ENCODE measurements at regions of chr1 and their contacts with region 1.

Region 1: GRCh38 chr1:166479052-166479631 is 312.3 kb upstream of the FAM78B start:
- DNase-seq: peak; percentile 71
- H3K4me3 Mint-ChIP-seq: no peak overlapping the region
- H3K27ac Mint-ChIP-seq: no peak overlapping the region
- H3K4me1 Mint-ChIP-seq: no peaks in the 10 kb centered on the region
- H3K27me3 Mint-ChIP-seq: peaks cover 29% of the 10 kb centered on the region
- CTCF ChIP-seq: peak; percentile 89

Region 2: GRCh38 chr1:165717918-165718515 is 761.1 kb before region 1 on chr1:
- CTCF ChIA-PET with region 1: interaction called, 3 read pairs
- POLR2A ChIA-PET with region 1: no interaction called
- intact Hi-C with region 1: loop called (anchors 1 kb)
- DNase-seq: peak; percentile 80
- H3K4me3 Mint-ChIP-seq: no peak overlapping the region
- H3K27ac Mint-ChIP-seq: no peak overlapping the region
- H3K4me1 Mint-ChIP-seq: no peaks in the 10 kb centered on the region
- H3K27me3 Mint-ChIP-seq: no peaks in the 10 kb centered on the region
- CTCF ChIP-seq: peak; percentile 87

Region 3: DNA sequence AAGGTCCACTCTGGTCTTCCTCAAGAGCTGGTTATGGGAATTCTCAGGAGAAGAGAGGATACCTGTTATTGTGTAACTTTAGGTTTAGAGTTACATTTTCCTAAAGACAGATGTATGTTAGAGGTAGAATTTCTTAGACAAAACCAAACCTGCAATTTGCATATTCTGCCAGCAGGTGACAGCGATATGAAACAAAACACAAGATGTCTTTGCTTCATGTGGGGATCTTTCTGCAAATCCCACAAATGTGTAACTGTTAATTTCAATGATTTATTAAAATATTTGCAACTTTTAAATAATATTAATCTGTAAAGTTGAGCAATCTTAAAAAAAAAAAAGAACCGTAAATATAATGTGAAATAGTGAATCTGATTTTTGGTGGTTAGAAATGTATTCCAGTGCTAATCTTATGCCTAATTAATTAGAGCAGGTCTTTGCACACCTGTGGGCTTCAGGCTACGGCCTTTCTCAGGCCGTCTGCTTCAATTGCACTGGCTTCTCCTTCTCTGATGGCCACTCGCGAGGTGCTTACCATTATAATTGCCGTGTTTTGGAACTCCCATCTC is 345.8 kb before region 1 on chr1:
- CTCF ChIA-PET with region 1: interaction called, 20 read pairs
- POLR2A ChIA-PET with region 1: no interaction called
- intact Hi-C with region 1: loop called (anchors 1 kb)
- DNase-seq: peak; percentile 68
- H3K4me3 Mint-ChIP-seq: no peak overlapping the region
- H3K27ac Mint-ChIP-seq: no peak overlapping the region
- H3K4me1 Mint-ChIP-seq: no peaks in the 10 kb centered on the region
- H3K27me3 Mint-ChIP-seq: peaks cover 17% of the 10 kb centered on the region
- CTCF ChIP-seq: peak; percentile 83

Region 4: DNA sequence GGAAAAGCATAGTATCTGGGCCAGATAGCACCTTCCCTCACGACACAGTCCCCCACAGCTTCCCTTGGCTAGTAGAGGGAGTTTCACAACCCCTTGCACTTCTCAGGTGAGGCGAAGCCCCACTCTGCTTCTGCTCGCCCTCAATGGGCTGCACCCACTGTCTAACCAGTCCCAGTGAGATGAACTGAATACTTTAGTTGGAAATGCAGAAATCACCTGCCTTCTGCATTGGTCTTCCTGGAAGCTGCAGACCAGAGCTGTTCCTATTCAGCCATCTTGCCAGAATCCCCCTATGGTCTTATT is 69.1 kb before region 1 on chr1:
- CTCF ChIA-PET with region 1: no interaction called
- POLR2A ChIA-PET with region 1: no interaction called
- intact Hi-C with region 1: no loop called
- DNase-seq: no peak
- H3K4me3 Mint-ChIP-seq: no peak overlapping the region
- H3K27ac Mint-ChIP-seq: no peak overlapping the region
- H3K4me1 Mint-ChIP-seq: no peaks in the 10 kb centered on the region
- H3K27me3 Mint-ChIP-seq: no peaks in the 10 kb centered on the region
- CTCF ChIP-seq: no peak

Region 5: DNA sequence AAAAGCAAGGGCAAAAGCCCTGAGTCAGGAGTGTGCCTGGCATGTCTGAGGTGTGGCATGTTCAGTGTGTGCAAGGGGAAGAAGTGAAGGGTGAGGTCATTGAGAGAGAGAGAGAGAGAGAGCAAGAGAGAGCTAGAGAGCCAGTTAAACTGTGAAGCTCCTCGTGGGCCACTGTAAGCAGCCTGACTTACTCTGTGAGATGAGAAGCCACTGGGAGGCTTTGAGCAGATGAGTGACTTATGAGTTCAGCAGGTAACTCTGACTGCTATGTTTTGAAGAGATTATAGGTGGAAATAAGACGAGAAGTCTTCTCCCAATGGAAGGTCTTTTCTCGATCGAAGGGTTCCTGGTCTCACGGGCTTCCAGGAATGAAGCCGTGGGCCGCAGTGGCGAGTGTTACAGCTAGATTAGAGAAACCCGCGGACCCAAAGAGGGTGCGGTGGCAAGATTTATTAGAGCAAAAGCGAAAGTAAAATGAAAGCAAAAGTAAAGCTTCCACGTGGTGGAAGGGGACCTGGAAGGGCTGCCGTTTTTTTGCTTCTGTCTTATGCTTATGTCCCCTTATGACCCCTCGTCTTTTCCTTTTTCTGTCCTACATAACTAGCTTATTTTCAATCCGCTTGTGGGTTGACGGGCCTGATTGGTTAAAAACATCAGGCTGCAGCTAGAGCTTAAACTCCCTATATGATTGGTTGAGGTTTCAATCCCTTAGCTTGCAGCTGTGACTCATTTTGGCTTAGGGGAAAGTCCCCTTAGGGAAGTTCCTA is 10.7 kb after region 1 on chr1:
- CTCF ChIA-PET with region 1: interaction called, 20 read pairs
- POLR2A ChIA-PET with region 1: no interaction called
- intact Hi-C with region 1: no loop called
- DNase-seq: peak; percentile 45
- H3K4me3 Mint-ChIP-seq: no peak overlapping the region
- H3K27ac Mint-ChIP-seq: no peak overlapping the region
- H3K4me1 Mint-ChIP-seq: no peaks in the 10 kb centered on the region
- H3K27me3 Mint-ChIP-seq: no peaks in the 10 kb centered on the region
- CTCF ChIP-seq: no peak

Region 6: DNA sequence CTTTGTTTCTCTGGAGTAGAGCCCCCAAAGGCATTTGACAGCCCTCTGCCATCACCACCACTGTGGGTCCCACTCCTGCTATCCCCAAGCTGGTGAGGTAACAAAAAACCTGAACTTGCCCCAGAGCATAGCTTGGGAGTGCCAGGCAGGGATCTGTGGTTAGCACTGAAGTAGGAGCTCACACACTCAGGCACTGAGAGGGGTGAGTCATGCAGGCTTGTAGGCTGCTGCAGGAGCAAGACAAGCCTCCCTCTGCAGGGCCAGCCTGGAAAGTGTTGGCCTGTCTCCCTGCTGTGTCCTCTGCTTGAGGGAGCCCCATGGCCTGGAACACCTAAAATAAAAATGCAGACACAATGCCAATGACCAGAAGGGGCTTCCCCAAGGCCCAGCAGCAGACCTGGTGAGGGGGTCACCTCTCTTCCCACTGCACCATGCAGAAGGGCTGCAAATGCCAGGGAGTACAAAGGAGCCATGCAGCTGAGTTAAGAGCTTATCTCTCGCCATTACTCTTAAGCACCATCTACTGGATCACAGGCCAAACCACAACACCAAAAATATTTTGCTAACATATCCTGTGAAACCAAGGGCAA is 251.3 kb after region 1 on chr1:
- CTCF ChIA-PET with region 1: interaction called, 25 read pairs
- POLR2A ChIA-PET with region 1: no interaction called
- intact Hi-C with region 1: loop called (anchors 2 kb)
- DNase-seq: peak; percentile 84
- H3K4me3 Mint-ChIP-seq: no peak overlapping the region
- H3K27ac Mint-ChIP-seq: no peak overlapping the region
- H3K4me1 Mint-ChIP-seq: peaks cover 6% of the 10 kb centered on the region
- H3K27me3 Mint-ChIP-seq: no peaks in the 10 kb centered on the region
- CTCF ChIP-seq: peak; percentile 18

Region 7: GRCh38 chr1:167278497-167278896 is 799.4 kb after region 1 on chr1:
- CTCF ChIA-PET with region 1: no interaction called
- POLR2A ChIA-PET with region 1: no interaction called
- intact Hi-C with region 1: no loop called
- DNase-seq: no peak
- H3K4me3 Mint-ChIP-seq: no peak overlapping the region
- H3K27ac Mint-ChIP-seq: no peak overlapping the region
- H3K4me1 Mint-ChIP-seq: peaks cover 17% of the 10 kb centered on the region
- H3K27me3 Mint-ChIP-seq: no peaks in the 10 kb centered on the region
- CTCF ChIP-seq: no peak

Measured in MCF 10A (cell line).